CD4-positive, alpha-beta T cell (primary cell): ENCODE measurements at regions of chr19 and their contacts with region 1.

Region 1: DNA sequence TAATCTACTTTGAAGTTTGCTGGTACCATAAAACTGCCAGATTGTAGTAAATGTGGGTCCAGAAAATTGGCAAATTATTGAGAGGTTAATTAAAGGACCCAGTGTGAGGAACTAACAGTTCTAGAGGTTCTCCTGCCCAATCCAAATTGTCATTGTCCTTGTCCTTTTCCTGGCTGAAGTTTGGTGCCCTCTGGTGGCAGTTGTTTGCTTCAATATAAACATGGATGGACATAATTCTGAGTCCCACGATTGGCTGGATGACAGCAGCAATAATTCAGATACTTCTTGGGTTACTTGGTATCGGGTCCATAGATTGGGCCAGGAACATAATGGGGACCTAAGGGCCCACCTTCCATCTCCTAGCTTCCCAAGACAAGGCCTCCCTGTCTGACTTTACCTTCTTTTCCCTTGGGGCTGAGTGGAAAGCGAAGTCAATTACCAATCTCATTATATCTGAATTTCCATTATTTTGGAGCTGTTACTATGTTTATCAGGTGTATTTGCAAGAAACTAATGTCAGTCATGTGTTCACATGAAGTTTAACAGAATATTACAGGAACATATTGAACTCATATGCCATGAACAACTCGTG is 33.8 kb upstream of the GARRE1 start:
- DNase-seq: peak; percentile 38 to 79 (median 51)
- ATAC-seq: no peak
- H3K4me3 ChIP-seq: no peak overlapping the region
- H3K4me3 Mint-ChIP-seq: no peak overlapping the region
- H3K27ac ChIP-seq: no peak overlapping the region
- H3K27ac Mint-ChIP-seq: peak overlapping the region; percentile 28
- H3K4me1 ChIP-seq: peaks cover 39% of the 10 kb centered on the region
- H3K4me1 Mint-ChIP-seq: peaks cover 61% of the 10 kb centered on the region
- H3K27me3 ChIP-seq: no peaks in the 10 kb centered on the region
- H3K27me3 Mint-ChIP-seq: no peaks in the 10 kb centered on the region
- CTCF ChIP-seq: peak; percentile 74

Region 2: GRCh38 chr19:33963514-33963913 is 257.1 kb before region 1 on chr19:
- CTCF ChIA-PET with region 1: no interaction called
- POLR2A ChIA-PET with region 1: no interaction called
- intact Hi-C with region 1: no loop called
- DNase-seq: no peak
- ATAC-seq: no peak
- H3K4me3 ChIP-seq: no peak overlapping the region
- H3K4me3 Mint-ChIP-seq: no peak overlapping the region
- H3K27ac ChIP-seq: no peak overlapping the region
- H3K27ac Mint-ChIP-seq: no peak overlapping the region
- H3K4me1 ChIP-seq: no peaks in the 10 kb centered on the region
- H3K4me1 Mint-ChIP-seq: no peaks in the 10 kb centered on the region
- H3K27me3 ChIP-seq: no peaks in the 10 kb centered on the region
- H3K27me3 Mint-ChIP-seq: peaks cover 29% of the 10 kb centered on the region
- CTCF ChIP-seq: no peak

Region 3: DNA sequence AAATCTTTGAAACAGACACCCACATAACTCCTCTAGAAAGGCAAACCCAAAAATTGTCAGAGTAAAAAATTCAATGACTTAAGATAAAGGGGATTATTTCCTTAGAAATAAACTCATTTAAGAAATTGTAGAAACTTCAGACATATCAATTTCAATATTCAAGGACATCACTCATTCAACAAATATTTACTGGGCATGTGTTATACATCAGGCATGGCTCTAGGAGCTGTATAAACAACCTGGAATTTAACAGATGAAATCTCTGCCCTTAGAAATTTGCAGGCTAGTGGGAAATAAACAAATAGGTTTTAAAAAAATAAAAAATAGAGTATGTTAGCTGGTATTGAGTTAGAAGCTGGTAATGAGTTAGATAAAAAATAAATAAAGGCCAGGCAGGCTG is 132.3 kb before region 1 on chr19:
- CTCF ChIA-PET with region 1: no interaction called
- POLR2A ChIA-PET with region 1: no interaction called
- intact Hi-C with region 1: no loop called
- DNase-seq: no peak
- ATAC-seq: no peak
- H3K4me3 ChIP-seq: no peak overlapping the region
- H3K4me3 Mint-ChIP-seq: no peak overlapping the region
- H3K27ac ChIP-seq: no peak overlapping the region
- H3K27ac Mint-ChIP-seq: no peak overlapping the region
- H3K4me1 ChIP-seq: no peaks in the 10 kb centered on the region
- H3K4me1 Mint-ChIP-seq: no peaks in the 10 kb centered on the region
- H3K27me3 ChIP-seq: peaks cover 0 to 6% of the 10 kb centered on the region in 2 experiments
- H3K27me3 Mint-ChIP-seq: peaks cover 19% of the 10 kb centered on the region
- CTCF ChIP-seq: no peak

Region 4: DNA sequence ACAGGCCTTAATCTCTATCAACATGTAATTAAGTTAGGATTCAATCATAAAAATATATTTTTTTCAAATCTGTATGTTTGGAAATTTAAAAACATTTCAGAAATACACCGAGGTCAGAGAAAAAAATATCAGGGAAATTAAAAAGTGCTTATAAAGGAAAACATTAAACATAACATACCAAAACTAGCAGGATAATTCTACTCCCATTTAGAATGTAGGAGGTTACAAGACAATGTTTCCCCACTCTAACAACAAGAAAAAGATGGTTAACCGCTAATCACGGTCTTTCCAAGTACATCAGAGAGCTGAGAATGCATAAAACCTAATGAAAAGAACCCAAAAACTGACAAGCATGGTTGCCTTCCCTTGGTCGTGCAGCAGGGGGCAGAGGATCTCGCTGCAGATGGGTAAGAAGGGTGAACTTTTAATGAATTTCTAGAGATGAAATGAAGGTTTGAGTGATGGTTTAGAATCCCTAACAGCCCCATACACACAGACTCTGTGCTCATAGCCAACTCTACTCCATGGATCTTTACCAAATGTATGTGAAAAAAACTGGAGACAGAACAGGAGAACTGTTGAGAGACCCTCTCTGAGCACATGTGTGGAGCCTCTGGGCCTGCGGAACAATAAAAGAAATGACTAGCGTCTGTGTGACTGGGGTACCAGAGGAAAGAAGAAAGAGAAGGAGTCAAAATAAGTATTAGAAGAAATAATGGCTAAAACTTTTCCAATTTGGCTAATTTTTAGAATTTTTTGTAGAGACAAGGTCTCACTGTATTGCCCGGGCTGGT is 99.5 kb before region 1 on chr19:
- CTCF ChIA-PET with region 1: no interaction called
- POLR2A ChIA-PET with region 1: no interaction called
- intact Hi-C with region 1: loop called in 1 of 2 experiments (anchors 5 kb)
- DNase-seq: peak; percentile 23 to 74 (median 50)
- ATAC-seq: peak; percentile 73
- H3K4me3 ChIP-seq: no peak overlapping the region
- H3K4me3 Mint-ChIP-seq: no peak overlapping the region
- H3K27ac ChIP-seq: no peak overlapping the region
- H3K27ac Mint-ChIP-seq: peak overlapping the region; percentile 4
- H3K4me1 ChIP-seq: no peaks in the 10 kb centered on the region
- H3K4me1 Mint-ChIP-seq: peaks cover 21% of the 10 kb centered on the region
- H3K27me3 ChIP-seq: no peaks in the 10 kb centered on the region
- H3K27me3 Mint-ChIP-seq: peaks cover 4% of the 10 kb centered on the region
- CTCF ChIP-seq: peak; percentile 80

Region 5: GRCh38 chr19:34171877-34172660 is 48.5 kb before region 1 on chr19 and contains the start of gene LSM14A:
- CTCF ChIA-PET with region 1: interaction called, 3 read pairs
- POLR2A ChIA-PET with region 1: interaction called, 11 read pairs
- intact Hi-C with region 1: loop called (anchors 2 kb)
- DNase-seq: peak; percentile 84 to 97 (median 91)
- ATAC-seq: peak; percentile 85
- H3K4me3 ChIP-seq: peak within 1 kb of the TSS; percentile 95
- H3K4me3 Mint-ChIP-seq: peak within 1 kb of the TSS; percentile 99
- H3K27ac ChIP-seq: peak within 1 kb of the TSS; percentile 97 to 98
- H3K27ac Mint-ChIP-seq: peak within 1 kb of the TSS; percentile 97
- H3K4me1 ChIP-seq: peaks cover 40% of the 10 kb centered on the region
- H3K4me1 Mint-ChIP-seq: peaks cover 50% of the 10 kb centered on the region
- H3K27me3 ChIP-seq: no peaks in the 10 kb centered on the region
- H3K27me3 Mint-ChIP-seq: no peaks in the 10 kb centered on the region
- CTCF ChIP-seq: no peak
- total RNA-seq, gene LSM14A: 210 to 217 TPM

Region 6: GRCh38 chr19:34253699-34254551 is 33.4 kb after region 1 on chr19:
- CTCF ChIA-PET with region 1: no interaction called
- POLR2A ChIA-PET with region 1: no interaction called
- intact Hi-C with region 1: loop called (anchors 5 kb)
- DNase-seq: peak in 7 of 14 experiments; percentile 53 to 91 (median 78)
- ATAC-seq: peak; percentile 46
- H3K4me3 ChIP-seq: peak overlapping the region; percentile 76
- H3K4me3 Mint-ChIP-seq: peak overlapping the region; percentile 95
- H3K27ac ChIP-seq: peak overlapping the region; percentile 75 to 83
- H3K27ac Mint-ChIP-seq: peak overlapping the region; percentile 90
- H3K4me1 ChIP-seq: peaks cover 31% of the 10 kb centered on the region
- H3K4me1 Mint-ChIP-seq: peaks cover 44% of the 10 kb centered on the region
- H3K27me3 ChIP-seq: no peaks in the 10 kb centered on the region
- H3K27me3 Mint-ChIP-seq: no peaks in the 10 kb centered on the region
- CTCF ChIP-seq: no peak

Region 7: GRCh38 chr19:34269968-34270621 is 49.5 kb after region 1 on chr19:
- CTCF ChIA-PET with region 1: no interaction called
- POLR2A ChIA-PET with region 1: interaction called, 8 read pairs
- intact Hi-C with region 1: loop called (anchors 1 to 5 kb)
- DNase-seq: peak; percentile 54 to 93 (median 70)
- ATAC-seq: peak; percentile 89
- H3K4me3 ChIP-seq: peak overlapping the region; percentile 41
- H3K4me3 Mint-ChIP-seq: peak overlapping the region; percentile 76
- H3K27ac ChIP-seq: peak overlapping the region; percentile 88 to 92
- H3K27ac Mint-ChIP-seq: peak overlapping the region; percentile 95
- H3K4me1 ChIP-seq: peaks cover 91% of the 10 kb centered on the region
- H3K4me1 Mint-ChIP-seq: peaks cover 86% of the 10 kb centered on the region
- H3K27me3 ChIP-seq: no peaks in the 10 kb centered on the region
- H3K27me3 Mint-ChIP-seq: no peaks in the 10 kb centered on the region
- CTCF ChIP-seq: no peak

Region 8: GRCh38 chr19:34317311-34317927 is 96.9 kb after region 1 on chr19:
- CTCF ChIA-PET with region 1: no interaction called
- POLR2A ChIA-PET with region 1: no interaction called
- intact Hi-C with region 1: loop called in 1 of 2 experiments (anchors 5 kb)
- DNase-seq: peak in 9 of 14 experiments; percentile 8 to 72 (median 41)
- ATAC-seq: peak; percentile 83
- H3K4me3 ChIP-seq: no peak overlapping the region
- H3K4me3 Mint-ChIP-seq: peak overlapping the region; percentile 61
- H3K27ac ChIP-seq: peak overlapping the region; percentile 16
- H3K27ac Mint-ChIP-seq: peak overlapping the region; percentile 89
- H3K4me1 ChIP-seq: peaks cover 40% of the 10 kb centered on the region
- H3K4me1 Mint-ChIP-seq: peaks cover 68% of the 10 kb centered on the region
- H3K27me3 ChIP-seq: no peaks in the 10 kb centered on the region
- H3K27me3 Mint-ChIP-seq: no peaks in the 10 kb centered on the region
- CTCF ChIP-seq: no peak

Region 9: DNA sequence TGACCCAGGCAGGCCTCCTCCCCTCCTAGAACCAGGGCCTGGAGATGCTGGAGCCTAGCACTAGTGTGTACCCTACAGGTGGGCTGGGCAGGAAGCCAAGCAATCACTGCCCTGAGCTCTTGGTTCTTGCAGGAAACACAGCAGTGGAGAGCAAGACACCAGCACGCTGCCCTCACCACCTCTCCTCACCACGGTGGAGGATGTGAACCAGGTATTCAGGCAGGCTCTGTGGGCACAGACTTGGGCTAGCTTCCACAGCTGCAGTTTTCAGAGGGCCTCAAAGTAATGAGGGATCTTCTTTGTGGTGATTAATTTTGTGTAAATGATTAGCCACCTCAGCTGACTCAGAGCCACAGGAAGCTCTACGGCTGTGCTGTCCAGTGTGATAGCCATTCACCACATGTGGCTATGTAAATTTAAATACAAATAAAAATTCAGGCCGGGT is 130.8 kb after region 1 on chr19:
- CTCF ChIA-PET with region 1: no interaction called
- POLR2A ChIA-PET with region 1: no interaction called
- intact Hi-C with region 1: loop called in 1 of 2 experiments (anchors 1 kb)
- DNase-seq: peak in 7 of 14 experiments; percentile 10 to 43 (median 33)
- ATAC-seq: no peak
- H3K4me3 ChIP-seq: no peak overlapping the region
- H3K4me3 Mint-ChIP-seq: no peak overlapping the region
- H3K27ac ChIP-seq: peak overlapping the region in 1 of 2 donors; percentile 29
- H3K27ac Mint-ChIP-seq: peak overlapping the region; percentile 62
- H3K4me1 ChIP-seq: peaks cover 33% of the 10 kb centered on the region
- H3K4me1 Mint-ChIP-seq: peaks cover 20% of the 10 kb centered on the region
- H3K27me3 ChIP-seq: no peaks in the 10 kb centered on the region
- H3K27me3 Mint-ChIP-seq: no peaks in the 10 kb centered on the region
- CTCF ChIP-seq: no peak